HepG2 (cell line): ENCODE measurements at regions of chr6 and their contacts with region 1.

Region 1: GRCh38 chr6:3139090-3139903 is 18.0 kb downstream of the TUBB2A start:
- DNase-seq: peak; percentile 98
- ATAC-seq: peak; percentile 94
- H3K4me3 ChIP-seq: peak overlapping the region in 1 of 3 experiments; percentile 24; a peak in 2 of 6 replicates
- H3K27ac ChIP-seq: peak overlapping the region; percentile 90
- H3K4me1 ChIP-seq: peaks cover 67% of the 10 kb centered on the region
- H3K27me3 ChIP-seq: no peaks in the 10 kb centered on the region
- CTCF ChIP-seq: peak; percentile 20; the same call in 1 of the 2 replicates
- EP300 ChIP-seq: peak; percentile 80 to 95; a peak in 3 of 4 replicates
- POLR2A ChIP-seq: peak; percentile 40 to 44; a peak in 1 of 4 replicates
- RAD21 ChIP-seq: peak; percentile 53

Region 2: DNA sequence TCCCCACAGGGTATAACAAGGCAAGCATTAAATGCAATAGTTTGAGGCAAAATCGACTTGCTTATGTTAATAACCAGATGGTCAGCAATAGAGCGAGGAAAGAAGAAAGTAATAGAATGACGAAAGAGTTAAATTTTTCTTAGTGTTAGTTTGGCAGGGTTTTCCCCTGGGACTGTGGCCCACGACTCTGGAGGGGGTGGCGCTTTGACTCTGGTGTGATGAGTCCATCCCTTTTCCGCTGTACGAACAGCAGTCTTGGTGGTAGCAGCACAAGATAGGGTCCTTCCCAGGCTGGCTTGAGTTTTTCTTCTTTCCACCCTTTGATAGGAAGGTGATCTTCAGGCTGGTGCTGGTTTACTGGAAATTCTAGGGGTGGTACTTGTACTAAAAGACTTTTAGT is 824.7 kb before region 1 on chr6:
- CTCF ChIA-PET with region 1: no interaction called
- POLR2A ChIA-PET with region 1: no interaction called
- in situ Hi-C with region 1: no loop called
- intact Hi-C with region 1: no loop called
- DNase-seq: no peak
- ATAC-seq: no peak
- H3K4me3 ChIP-seq: no peak overlapping the region
- H3K27ac ChIP-seq: no peak overlapping the region
- H3K4me1 ChIP-seq: no peaks in the 10 kb centered on the region
- H3K27me3 ChIP-seq: no peaks in the 10 kb centered on the region
- CTCF ChIP-seq: no peak
- EP300 ChIP-seq: no peak
- POLR2A ChIP-seq: no peak
- RAD21 ChIP-seq: no peak

Region 3: GRCh38 chr6:3039384-3039783 is 99.9 kb before region 1 on chr6:
- CTCF ChIA-PET with region 1: no interaction called
- POLR2A ChIA-PET with region 1: no interaction called
- in situ Hi-C with region 1: no loop called
- intact Hi-C with region 1: no loop called
- DNase-seq: no peak
- ATAC-seq: no peak
- H3K4me3 ChIP-seq: no peak overlapping the region
- H3K27ac ChIP-seq: no peak overlapping the region
- H3K4me1 ChIP-seq: peaks cover 13% of the 10 kb centered on the region
- H3K27me3 ChIP-seq: peaks cover 2 to 33% of the 10 kb centered on the region in 2 experiments; a peak in 4 of 5 replicates
- CTCF ChIP-seq: no peak
- EP300 ChIP-seq: no peak
- POLR2A ChIP-seq: no peak
- RAD21 ChIP-seq: no peak

Region 4: DNA sequence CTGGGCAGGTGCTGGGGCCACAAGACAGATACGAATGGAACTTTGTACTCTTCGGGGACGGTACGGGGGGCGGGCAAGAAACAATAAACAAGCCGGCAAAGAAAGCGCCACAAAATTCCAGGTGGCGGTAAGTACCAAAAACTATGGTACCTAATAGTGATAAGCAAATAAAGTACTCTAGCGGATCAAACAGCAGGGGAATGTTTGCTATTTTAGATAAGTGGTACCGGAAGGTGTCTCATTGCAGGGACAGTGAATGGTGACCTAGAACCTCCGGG is 86.1 kb before region 1 on chr6:
- CTCF ChIA-PET with region 1: no interaction called
- POLR2A ChIA-PET with region 1: no interaction called
- in situ Hi-C with region 1: no loop called
- intact Hi-C with region 1: no loop called
- DNase-seq: peak; percentile 89
- ATAC-seq: no peak
- H3K4me3 ChIP-seq: peak overlapping the region; percentile 57 to 80 (median 72)
- H3K27ac ChIP-seq: peak overlapping the region; percentile 85
- H3K4me1 ChIP-seq: peaks cover 46% of the 10 kb centered on the region
- H3K27me3 ChIP-seq: peaks cover 0 to 30% of the 10 kb centered on the region in 2 experiments; a peak in 2 of 5 replicates
- CTCF ChIP-seq: no peak
- EP300 ChIP-seq: peak in 1 of 2 experiments; percentile 32; a peak in 1 of 4 replicates
- POLR2A ChIP-seq: no peak
- RAD21 ChIP-seq: no peak

Region 5: GRCh38 chr6:3118353-3119039 is 20.8 kb before region 1 on chr6 and contains the start of gene BPHL:
- CTCF ChIA-PET with region 1: no interaction called
- POLR2A ChIA-PET with region 1: interaction called, 19 read pairs
- in situ Hi-C with region 1: no loop called
- intact Hi-C with region 1: loop called (anchors 2 kb)
- DNase-seq: peak; percentile 87
- ATAC-seq: peak; percentile 89
- H3K4me3 ChIP-seq: peak within 1 kb of the TSS; percentile 82 to 84 (median 84)
- H3K27ac ChIP-seq: peak within 1 kb of the TSS; percentile 88
- H3K4me1 ChIP-seq: peaks cover 35% of the 10 kb centered on the region
- H3K27me3 ChIP-seq: no peaks in the 10 kb centered on the region; a peak in 1 of 5 replicates
- CTCF ChIP-seq: peak; percentile 63
- EP300 ChIP-seq: no peak
- POLR2A ChIP-seq: peak; percentile 84 to 96
- RAD21 ChIP-seq: peak; percentile 67
- total RNA-seq, gene BPHL: 39.5 and 48.6 TPM in 2 replicates

Region 6: GRCh38 chr6:3157131-3157927 is 18.0 kb after region 1 on chr6 and contains the start of gene TUBB2A:
- CTCF ChIA-PET with region 1: no interaction called
- POLR2A ChIA-PET with region 1: interaction called, 23 read pairs
- in situ Hi-C with region 1: no loop called
- intact Hi-C with region 1: loop called (anchors 2 kb)
- DNase-seq: peak; percentile 56
- ATAC-seq: peak; percentile 78
- H3K4me3 ChIP-seq: peak within 1 kb of the TSS; percentile 63 to 91 (median 70)
- H3K27ac ChIP-seq: peak within 1 kb of the TSS; percentile 57
- H3K4me1 ChIP-seq: peaks cover 45% of the 10 kb centered on the region
- H3K27me3 ChIP-seq: no peaks in the 10 kb centered on the region
- CTCF ChIP-seq: peak; percentile 76
- EP300 ChIP-seq: peak in 1 of 2 experiments; percentile 14; a peak in 1 of 4 replicates
- POLR2A ChIP-seq: peak; percentile 78 to 96
- RAD21 ChIP-seq: peak; percentile 93
- total RNA-seq, gene TUBB2A: 35.3 and 38.1 TPM in 2 replicates

Region 7: DNA sequence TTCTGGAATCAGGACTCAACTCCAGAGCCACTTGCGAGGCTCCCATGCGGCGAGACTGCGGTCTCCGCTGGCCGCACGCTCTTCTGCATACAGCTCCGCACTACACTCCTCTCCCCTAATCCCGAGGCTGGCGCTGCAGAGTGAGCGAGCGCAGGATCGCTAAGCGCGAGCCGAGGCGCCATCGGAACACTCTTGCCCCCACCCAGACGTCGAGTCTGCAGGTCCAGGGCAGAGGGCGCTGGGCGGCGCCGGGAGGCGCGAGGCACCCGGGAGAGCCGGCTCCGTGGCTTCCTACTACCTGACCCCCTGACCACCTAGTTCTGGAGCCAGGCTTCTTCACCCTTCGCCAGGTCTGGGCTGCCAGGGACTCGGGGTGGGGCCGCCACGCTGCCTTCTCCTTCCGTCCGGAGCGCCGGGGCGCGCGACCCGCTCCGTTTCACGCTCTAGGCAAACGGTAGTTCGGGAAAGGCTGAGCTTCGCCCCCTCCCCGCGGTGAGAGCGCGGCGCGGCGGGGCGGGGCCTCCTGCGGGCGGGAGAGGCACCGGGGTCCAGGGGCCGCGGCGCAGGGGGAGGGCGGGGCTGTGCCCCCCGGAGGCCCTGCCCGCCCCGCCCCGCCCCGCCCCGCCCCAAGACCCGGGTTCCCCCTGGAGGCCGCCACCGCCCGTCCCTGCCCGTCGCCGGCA is 23.4 kb after region 1 on chr6:
- CTCF ChIA-PET with region 1: no interaction called
- POLR2A ChIA-PET with region 1: interaction called, 23 read pairs
- in situ Hi-C with region 1: no loop called
- intact Hi-C with region 1: loop called (anchors 2 kb)
- DNase-seq: peak; percentile 80
- ATAC-seq: peak; percentile 91
- H3K4me3 ChIP-seq: peak overlapping the region; percentile 67 to 84 (median 72)
- H3K27ac ChIP-seq: peak overlapping the region; percentile 89
- H3K4me1 ChIP-seq: peaks cover 71% of the 10 kb centered on the region
- H3K27me3 ChIP-seq: no peaks in the 10 kb centered on the region
- CTCF ChIP-seq: peak; percentile 58
- EP300 ChIP-seq: no peak; a peak in 1 of 4 replicates
- POLR2A ChIP-seq: peak; percentile 66 to 91
- RAD21 ChIP-seq: peak; percentile 81

Region 8: DNA sequence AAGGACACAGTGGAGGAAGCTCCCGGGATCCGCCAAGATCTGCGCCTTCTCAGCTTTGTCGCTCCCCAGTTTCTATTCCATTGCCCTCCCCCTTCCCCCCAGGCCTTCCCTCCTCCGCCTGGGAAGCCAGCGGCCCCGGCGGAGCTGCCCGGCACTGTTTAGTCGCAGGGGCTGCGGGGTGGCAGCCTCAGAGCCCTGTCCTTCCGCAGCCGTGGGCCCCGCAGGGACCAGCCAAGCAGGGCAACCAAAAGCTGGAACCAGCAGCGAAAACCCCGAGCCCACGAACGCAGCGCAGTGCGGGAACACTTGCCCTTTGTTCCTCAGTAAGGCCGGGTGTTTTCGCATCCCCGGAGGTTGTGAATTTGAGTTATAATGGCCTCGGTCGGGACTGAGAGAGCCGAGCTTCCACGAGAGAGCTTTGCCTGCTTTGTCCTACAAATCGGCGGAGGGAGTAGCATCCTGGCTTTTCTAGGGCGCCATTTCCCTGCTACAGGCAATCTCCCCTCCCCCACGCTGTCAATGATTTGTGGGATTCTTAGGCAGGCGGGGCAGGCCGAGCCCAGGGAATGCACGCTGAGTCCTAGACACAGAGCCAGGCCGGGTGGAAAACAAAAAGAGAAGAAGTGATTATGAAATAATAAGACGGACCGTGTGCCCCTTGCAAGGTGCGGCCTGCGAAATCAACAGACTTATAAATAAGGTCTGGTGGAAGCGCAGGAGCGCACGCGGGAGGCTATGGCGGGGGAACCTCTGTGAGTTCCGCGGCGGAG is 92.1 kb after region 1 on chr6:
- CTCF ChIA-PET with region 1: no interaction called
- POLR2A ChIA-PET with region 1: interaction called, 6 read pairs
- in situ Hi-C with region 1: no loop called
- intact Hi-C with region 1: loop called (anchors 5 kb)
- DNase-seq: peak; percentile 80
- ATAC-seq: peak; percentile 77
- H3K4me3 ChIP-seq: peak overlapping the region; percentile 57 to 81 (median 74)
- H3K27ac ChIP-seq: no peak overlapping the region
- H3K4me1 ChIP-seq: peaks cover 53% of the 10 kb centered on the region
- H3K27me3 ChIP-seq: peaks cover 26 to 89% of the 10 kb centered on the region in 2 experiments
- CTCF ChIP-seq: no peak
- EP300 ChIP-seq: peak in 1 of 2 experiments; percentile 63; a peak in 1 of 4 replicates
- POLR2A ChIP-seq: peak in 1 of 2 experiments; percentile 51; a peak in 2 of 4 replicates
- RAD21 ChIP-seq: no peak